Panc1 (cell line): ENCODE measurements at regions of chr5 and their contacts with region 1.

Region 1: GRCh38 chr5:41856644-41857491 is 13.4 kb downstream of the OXCT1 start:
- DNase-seq: peak; percentile 72
- ATAC-seq: peak; percentile 96
- H3K4me3 ChIP-seq: no peak overlapping the region
- H3K27ac ChIP-seq: no peak overlapping the region
- H3K4me1 ChIP-seq: no peaks in the 10 kb centered on the region
- H3K27me3 ChIP-seq: no peaks in the 10 kb centered on the region
- CTCF ChIP-seq: peak; percentile 79

Region 2: DNA sequence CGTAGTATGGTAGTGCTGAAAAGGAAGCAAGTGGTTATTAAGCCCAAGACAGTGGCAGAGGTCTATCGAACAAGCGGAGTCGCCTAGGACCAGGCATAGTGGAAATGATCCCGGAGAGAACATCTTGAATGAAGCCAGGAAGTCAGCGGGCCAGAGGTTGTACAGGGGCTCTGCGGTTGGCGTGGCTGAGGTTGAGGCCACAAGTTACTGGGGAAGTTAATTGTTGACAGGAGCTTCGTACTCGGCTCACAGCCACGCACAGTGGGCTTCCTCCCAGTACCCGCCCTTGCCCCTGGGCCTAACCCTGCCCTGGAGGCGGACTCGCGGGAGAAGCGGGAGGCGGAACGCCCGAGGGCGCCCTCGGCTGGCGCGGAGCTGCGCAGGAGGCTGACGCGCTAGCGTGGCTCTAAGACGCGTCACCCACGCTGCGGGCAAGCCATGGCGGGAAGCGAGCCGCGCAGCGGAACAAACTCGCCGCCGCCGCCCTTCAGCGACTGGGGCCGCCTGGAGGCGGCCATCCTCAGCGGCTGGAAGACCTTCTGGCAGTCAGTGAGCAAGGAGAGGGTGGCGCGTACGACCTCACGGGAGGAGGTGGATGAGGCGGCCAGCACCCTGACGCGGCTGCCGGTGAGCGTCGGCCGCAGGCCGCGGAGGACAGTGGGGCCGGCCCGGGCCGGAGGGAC is 68.1 kb after region 1 on chr5 and contains the start of gene FBXO4:
- CTCF ChIA-PET with region 1: no interaction called
- POLR2A ChIA-PET with region 1: no interaction called
- in situ Hi-C with region 1: no loop called
- intact Hi-C with region 1: loop called (anchors 2 kb)
- DNase-seq: no peak
- ATAC-seq: peak; percentile 99
- H3K4me3 ChIP-seq: peak within 1 kb of the TSS; percentile 70 to 78
- H3K27ac ChIP-seq: peak within 1 kb of the TSS; percentile 87
- H3K4me1 ChIP-seq: peaks cover 5% of the 10 kb centered on the region; the same call in 1 of the 2 replicates
- H3K27me3 ChIP-seq: no peaks in the 10 kb centered on the region
- CTCF ChIP-seq: peak; percentile 83
- total RNA-seq, gene FBXO4: 5.7 TPM

Region 3: GRCh38 chr5:42057254-42057690 is 200.4 kb after region 1 on chr5:
- CTCF ChIA-PET with region 1: interaction called, 21 read pairs
- POLR2A ChIA-PET with region 1: no interaction called
- in situ Hi-C with region 1: no loop called
- intact Hi-C with region 1: loop called (anchors 1 kb)
- DNase-seq: peak; percentile 48
- ATAC-seq: peak; percentile 76
- H3K4me3 ChIP-seq: no peak overlapping the region
- H3K27ac ChIP-seq: no peak overlapping the region
- H3K4me1 ChIP-seq: no peaks in the 10 kb centered on the region
- H3K27me3 ChIP-seq: peaks cover under 1% of the 10 kb centered on the region
- CTCF ChIP-seq: peak; percentile 88

Region 4: GRCh38 chr5:42583322-42583721 is 726.5 kb after region 1 on chr5:
- CTCF ChIA-PET with region 1: interaction called, 5 read pairs
- POLR2A ChIA-PET with region 1: no interaction called
- in situ Hi-C with region 1: no loop called
- intact Hi-C with region 1: loop called (anchors 5 kb)
- DNase-seq: peak; percentile 35
- ATAC-seq: peak; percentile 63
- H3K4me3 ChIP-seq: no peak overlapping the region
- H3K27ac ChIP-seq: no peak overlapping the region
- H3K4me1 ChIP-seq: no peaks in the 10 kb centered on the region
- H3K27me3 ChIP-seq: no peaks in the 10 kb centered on the region; the same call in 1 of the 2 replicates
- CTCF ChIP-seq: peak; percentile 86

Region 5: GRCh38 chr5:42767491-42768105 is 910.7 kb after region 1 on chr5:
- CTCF ChIA-PET with region 1: interaction called, 4 read pairs
- POLR2A ChIA-PET with region 1: no interaction called
- in situ Hi-C with region 1: no loop called
- intact Hi-C with region 1: loop called (anchors 5 kb)
- DNase-seq: peak; percentile 18
- ATAC-seq: 0 out of 2 replicates have a peak, but pooled peaks have one; percentile 58
- H3K4me3 ChIP-seq: no peak overlapping the region
- H3K27ac ChIP-seq: no peak overlapping the region
- H3K4me1 ChIP-seq: no peaks in the 10 kb centered on the region
- H3K27me3 ChIP-seq: peaks cover 5% of the 10 kb centered on the region
- CTCF ChIP-seq: peak; percentile 63; the same call in 1 of the 2 replicates

Region 6: GRCh38 chr5:42889311-42889933 is 1032.6 kb after region 1 on chr5:
- CTCF ChIA-PET with region 1: interaction called, 7 read pairs
- POLR2A ChIA-PET with region 1: no interaction called
- in situ Hi-C with region 1: no loop called
- intact Hi-C with region 1: loop called (anchors 5 kb)
- DNase-seq: peak; percentile 72
- ATAC-seq: peak; percentile 97
- H3K4me3 ChIP-seq: no peak overlapping the region
- H3K27ac ChIP-seq: no peak overlapping the region
- H3K4me1 ChIP-seq: no peaks in the 10 kb centered on the region
- H3K27me3 ChIP-seq: peaks cover 10% of the 10 kb centered on the region
- CTCF ChIP-seq: peak; percentile 93